A673 (cell line): ENCODE measurements at regions of chr11 and their contacts with region 1.

Region 1: DNA sequence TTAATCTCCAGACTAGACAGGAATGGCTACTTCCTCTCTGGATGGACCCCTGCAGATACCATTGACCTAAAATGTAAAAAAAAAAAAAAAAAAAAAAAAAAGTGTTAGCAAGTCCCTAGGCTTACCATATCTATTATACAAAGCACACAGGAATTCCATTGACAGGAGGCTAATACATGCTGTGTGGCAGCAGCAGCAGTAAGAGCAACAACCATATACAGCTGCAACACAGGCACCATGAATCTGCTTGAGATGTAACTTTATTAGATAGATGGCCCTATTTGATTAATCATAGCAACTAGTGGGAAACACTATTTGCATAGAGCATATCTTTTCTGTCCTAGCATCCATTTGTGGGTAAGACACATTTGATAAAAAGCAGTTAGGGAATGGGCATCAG is 1447.1 kb downstream of the FAM181B start:
- DNase-seq: peak; percentile 87
- H3K4me3 ChIP-seq: no peak overlapping the region
- H3K27ac ChIP-seq: no peak overlapping the region
- H3K4me1 ChIP-seq: peaks cover 4% of the 10 kb centered on the region
- H3K27me3 ChIP-seq: no peaks in the 10 kb centered on the region
- CTCF ChIP-seq: no peak

Region 2: DNA sequence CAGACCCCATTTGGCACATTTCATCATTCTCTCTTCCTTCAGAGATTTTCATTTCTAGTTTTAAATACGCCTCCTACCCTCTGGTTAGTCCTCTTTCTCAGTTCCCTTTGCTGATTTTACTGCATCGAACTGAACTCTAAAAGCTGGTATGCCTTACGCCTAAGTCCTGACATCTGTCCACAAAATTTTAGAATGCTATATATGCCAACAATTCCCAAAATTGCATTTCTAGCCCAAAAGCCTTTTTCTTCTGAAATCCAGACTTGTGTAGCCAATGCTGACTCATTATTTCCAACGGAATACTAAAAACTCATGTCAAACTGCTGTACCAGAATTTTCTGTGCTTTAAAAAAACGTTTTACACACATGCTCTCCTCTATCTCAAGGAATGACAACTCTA is 721.3 kb before region 1 on chr11:
- CTCF ChIA-PET with region 1: no interaction called
- POLR2A ChIA-PET with region 1: interaction called, 35 read pairs
- intact Hi-C with region 1: no loop called
- DNase-seq: no peak
- H3K4me3 ChIP-seq: no peak overlapping the region
- H3K27ac ChIP-seq: no peak overlapping the region
- H3K4me1 ChIP-seq: no peaks in the 10 kb centered on the region
- H3K27me3 ChIP-seq: no peaks in the 10 kb centered on the region
- CTCF ChIP-seq: no peak